ENCODE measurements at regions of chr12 and their contacts with region 1.

Region 1: DNA sequence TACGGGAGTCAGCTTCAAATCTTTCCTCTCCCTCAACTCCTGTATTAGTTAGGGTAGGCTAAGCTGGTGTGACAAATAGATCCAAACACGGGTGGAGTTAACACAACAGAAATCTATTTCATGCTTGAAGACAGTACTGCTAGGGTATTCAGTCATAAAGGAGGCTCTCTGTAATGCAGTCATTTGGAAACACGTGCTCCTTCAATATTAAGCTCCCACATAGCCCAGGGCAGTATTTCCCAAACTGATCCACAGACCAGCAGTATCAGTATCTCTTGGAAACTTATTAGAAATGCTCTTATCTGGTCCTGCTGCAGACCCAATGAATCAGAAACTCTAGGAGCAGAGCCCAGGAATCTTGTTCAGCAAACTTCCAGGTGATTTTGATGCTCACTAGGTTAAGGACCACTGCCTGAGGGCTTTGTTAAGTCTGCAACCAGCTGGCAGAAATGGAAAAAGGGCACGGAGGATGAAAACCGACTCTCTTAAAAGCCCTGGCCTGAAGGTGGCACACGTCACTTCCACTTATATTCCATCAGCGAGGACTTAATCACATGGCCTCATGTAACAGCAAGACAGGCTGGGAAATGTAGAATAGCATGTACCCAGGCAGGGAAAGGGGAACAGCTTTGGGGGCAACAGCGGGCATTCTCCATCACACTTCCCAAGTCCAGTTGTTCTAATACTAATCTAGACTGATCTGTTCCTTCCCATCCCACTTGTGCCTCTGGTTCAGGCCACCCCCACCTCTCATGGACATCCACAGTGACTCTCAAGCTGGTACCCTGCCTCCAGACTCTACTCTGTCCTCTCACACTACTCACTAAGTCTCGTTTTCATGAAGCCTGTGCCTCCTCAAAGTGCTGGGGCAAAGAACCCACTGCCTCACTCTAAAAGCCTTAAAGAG is 38.2 kb upstream of the RIC8B start:
- DNase-seq: no peak
- ATAC-seq: peak; percentile 53 to 92 (median 77)
- H3K4me3 ChIP-seq: no peak overlapping the region
- H3K27ac ChIP-seq: no peak overlapping the region
- H3K4me1 ChIP-seq: no peaks in the 10 kb centered on the region
- H3K27me3 ChIP-seq: no peaks in the 10 kb centered on the region
- CTCF ChIP-seq: peak; percentile 17

Region 2: DNA sequence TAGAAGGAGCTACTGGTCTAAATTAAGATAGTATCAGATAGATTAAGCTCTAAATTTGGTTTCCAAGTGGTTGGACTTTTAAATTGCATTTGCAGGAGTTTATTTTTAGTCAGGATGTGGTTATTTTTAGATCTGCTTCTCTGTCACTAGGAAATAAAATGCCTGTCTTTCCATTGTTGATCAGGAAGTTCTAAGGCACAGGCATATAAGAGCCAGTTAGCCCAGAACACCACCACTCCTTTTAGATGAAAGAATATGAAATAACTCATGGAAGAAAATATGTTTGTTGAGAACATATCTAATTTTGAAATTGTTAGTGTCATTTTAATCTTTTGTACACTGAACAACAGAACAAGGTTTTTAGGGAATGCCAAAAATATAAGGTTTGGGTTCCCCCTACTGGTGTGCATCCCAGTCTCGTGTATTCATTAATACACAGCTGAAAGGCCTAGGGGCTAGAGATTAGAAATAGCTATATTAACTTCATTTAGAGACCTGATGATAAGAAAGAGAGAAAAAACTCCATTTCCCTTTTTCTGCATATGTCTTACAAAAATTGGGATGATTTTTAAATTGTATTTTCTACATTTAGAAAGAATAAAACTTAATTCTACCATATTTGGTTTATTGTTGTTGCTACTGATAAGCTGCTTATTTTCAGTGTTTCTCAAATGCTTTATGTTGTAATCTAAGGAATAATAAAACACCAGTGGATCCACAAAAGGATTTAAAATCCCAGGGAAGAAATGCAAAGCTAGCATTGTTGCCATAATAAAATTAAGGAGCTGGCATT is 105.4 kb after region 1 on chr12:
- intact Hi-C with region 1: loop called (anchors 10 kb)
- DNase-seq: no peak
- ATAC-seq: peak in 3 of 4 donors; percentile 65 to 94 (median 78)
- H3K4me3 ChIP-seq: no peak overlapping the region
- H3K27ac ChIP-seq: peak overlapping the region; percentile 3
- H3K4me1 ChIP-seq: peaks cover 32% of the 10 kb centered on the region
- H3K27me3 ChIP-seq: no peaks in the 10 kb centered on the region
- CTCF ChIP-seq: peak; percentile 53

Region 3: DNA sequence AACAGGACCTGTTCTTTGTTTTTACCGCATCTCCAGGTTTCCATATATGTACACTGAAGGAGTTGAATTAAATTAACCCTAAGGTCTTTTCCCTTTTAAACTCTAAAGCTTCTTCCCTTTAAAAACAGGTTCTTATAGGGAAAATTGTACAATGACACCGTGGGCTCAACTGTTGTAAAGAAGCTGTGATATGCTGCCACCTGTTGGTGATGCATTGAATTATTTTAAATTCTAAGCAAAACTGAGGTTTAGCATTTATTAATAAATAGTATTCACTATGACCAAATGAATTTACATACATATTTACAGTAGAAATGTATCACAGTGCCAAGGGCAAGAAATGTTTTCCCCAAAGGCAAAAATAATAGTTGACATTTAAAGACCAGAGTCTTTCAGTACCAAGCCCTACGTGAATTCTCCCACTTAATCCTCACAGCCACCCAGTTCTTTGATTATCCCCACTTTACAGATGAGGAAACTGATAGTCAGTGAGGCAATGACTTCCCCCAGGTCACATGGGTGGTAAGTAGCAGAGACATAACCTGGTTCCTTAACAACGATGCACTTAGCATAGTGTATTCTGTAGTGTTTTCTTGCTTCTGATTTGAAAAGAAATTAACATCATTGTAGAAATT is 183.7 kb after region 1 on chr12:
- intact Hi-C with region 1: loop called in 1 of 2 experiments (anchors 10 kb)
- DNase-seq: no peak
- ATAC-seq: peak in 1 of 4 donors; percentile 68
- H3K4me3 ChIP-seq: no peak overlapping the region
- H3K27ac ChIP-seq: no peak overlapping the region
- H3K4me1 ChIP-seq: no peaks in the 10 kb centered on the region
- H3K27me3 ChIP-seq: no peaks in the 10 kb centered on the region
- CTCF ChIP-seq: peak; percentile 83